ENCODE measurements at regions of chr11 and their contacts with region 1.

Region 1: GRCh38 chr11:131748151-131749050 is 378.0 kb downstream of the NTM start:
- DNase-seq: peak in 2 of 9 donors; percentile 7 to 28
- ATAC-seq: peak; percentile 58
- H3K4me3 ChIP-seq: no peak overlapping the region
- H3K4me3 Mint-ChIP-seq: no peak overlapping the region
- H3K27ac ChIP-seq: no peak overlapping the region
- H3K27ac Mint-ChIP-seq: no peak overlapping the region
- H3K4me1 ChIP-seq: no peaks in the 10 kb centered on the region
- H3K4me1 Mint-ChIP-seq: peaks cover 0 to 1% (median 0%) of the 10 kb centered on the region in 7 donors
- H3K27me3 ChIP-seq: no peaks in the 10 kb centered on the region
- H3K27me3 Mint-ChIP-seq: peaks cover 0 to 14% (median 9%) of the 10 kb centered on the region in 5 donors

Region 2: DNA sequence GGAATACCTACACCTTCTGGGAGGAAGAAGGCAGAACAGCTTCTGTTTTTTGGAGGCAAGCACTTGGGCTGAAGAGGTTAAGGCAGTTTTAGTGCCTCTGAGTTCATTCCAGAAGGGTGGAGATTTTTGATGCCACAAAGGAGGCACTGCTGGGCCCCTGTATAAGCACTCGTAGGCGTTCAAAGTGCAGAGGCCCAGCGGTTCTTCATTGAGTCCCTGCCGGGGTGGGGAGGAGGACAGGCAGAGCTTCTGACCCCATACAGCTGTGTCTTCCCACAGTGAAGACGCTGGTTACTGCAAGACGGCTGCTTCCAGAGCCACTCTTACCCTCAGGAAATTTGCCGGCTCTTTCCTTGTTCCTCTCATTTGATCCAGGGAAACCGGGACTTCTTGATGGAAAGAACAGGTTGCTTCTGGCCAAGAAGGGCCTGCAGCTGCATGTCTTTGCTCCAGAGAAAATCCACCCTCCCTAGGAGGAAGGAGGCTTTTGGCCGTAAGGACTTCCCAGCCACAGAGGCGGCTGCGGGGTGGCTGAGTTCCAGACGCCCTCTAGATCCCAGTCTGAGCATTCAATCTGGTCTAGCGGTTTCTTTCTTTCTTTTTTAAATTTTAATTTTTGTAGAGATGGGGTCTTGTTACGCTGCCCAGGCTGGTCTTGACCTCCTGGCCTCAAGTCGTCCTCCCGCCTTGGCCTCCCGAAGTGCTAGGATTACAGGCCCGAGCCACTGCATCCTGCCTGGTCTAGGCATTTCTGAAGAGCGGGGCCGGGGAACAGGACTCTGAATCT is 1290.6 kb before region 1 on chr11:
- CTCF ChIA-PET with region 1: no interaction called
- POLR2A ChIA-PET with region 1: no interaction called
- intact Hi-C with region 1: no loop called
- DNase-seq: no peak
- ATAC-seq: no peak
- H3K4me3 ChIP-seq: no peak overlapping the region
- H3K4me3 Mint-ChIP-seq: no peak overlapping the region
- H3K27ac ChIP-seq: no peak overlapping the region
- H3K27ac Mint-ChIP-seq: no peak overlapping the region
- H3K4me1 ChIP-seq: no peaks in the 10 kb centered on the region
- H3K4me1 Mint-ChIP-seq: no peaks in the 10 kb centered on the region
- H3K27me3 ChIP-seq: no peaks in the 10 kb centered on the region
- H3K27me3 Mint-ChIP-seq: peaks cover 0 to 40% (median 20%) of the 10 kb centered on the region in 5 donors

Region 3: DNA sequence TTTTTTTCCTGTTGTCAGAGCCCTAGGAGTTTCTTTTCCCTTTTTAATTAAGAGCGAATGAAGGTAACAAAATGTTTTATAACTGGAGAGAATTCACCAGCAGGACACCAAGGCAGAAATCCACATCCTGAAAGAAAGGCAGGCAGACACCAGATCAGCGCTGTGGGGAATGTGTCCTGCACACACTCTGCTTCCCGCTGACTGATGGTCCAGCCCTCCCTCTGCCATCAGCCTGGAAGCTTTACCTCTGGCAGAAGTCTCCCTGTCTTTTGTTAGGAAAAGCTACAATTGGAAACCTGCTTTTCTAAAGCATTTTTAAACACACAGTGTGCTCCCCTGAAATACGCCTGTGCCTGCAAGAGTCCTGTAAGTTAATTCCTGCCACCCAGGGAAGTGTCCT is 260.5 kb after region 1 on chr11:
- CTCF ChIA-PET with region 1: no interaction called
- POLR2A ChIA-PET with region 1: no interaction called
- intact Hi-C with region 1: no loop called
- DNase-seq: no peak
- ATAC-seq: no peak
- H3K4me3 ChIP-seq: no peak overlapping the region
- H3K4me3 Mint-ChIP-seq: no peak overlapping the region
- H3K27ac ChIP-seq: no peak overlapping the region
- H3K27ac Mint-ChIP-seq: no peak overlapping the region
- H3K4me1 ChIP-seq: no peaks in the 10 kb centered on the region
- H3K4me1 Mint-ChIP-seq: no peaks in the 10 kb centered on the region
- H3K27me3 ChIP-seq: no peaks in the 10 kb centered on the region
- H3K27me3 Mint-ChIP-seq: peaks cover 0 to 4% (median 0%) of the 10 kb centered on the region in 5 donors

Region 4: DNA sequence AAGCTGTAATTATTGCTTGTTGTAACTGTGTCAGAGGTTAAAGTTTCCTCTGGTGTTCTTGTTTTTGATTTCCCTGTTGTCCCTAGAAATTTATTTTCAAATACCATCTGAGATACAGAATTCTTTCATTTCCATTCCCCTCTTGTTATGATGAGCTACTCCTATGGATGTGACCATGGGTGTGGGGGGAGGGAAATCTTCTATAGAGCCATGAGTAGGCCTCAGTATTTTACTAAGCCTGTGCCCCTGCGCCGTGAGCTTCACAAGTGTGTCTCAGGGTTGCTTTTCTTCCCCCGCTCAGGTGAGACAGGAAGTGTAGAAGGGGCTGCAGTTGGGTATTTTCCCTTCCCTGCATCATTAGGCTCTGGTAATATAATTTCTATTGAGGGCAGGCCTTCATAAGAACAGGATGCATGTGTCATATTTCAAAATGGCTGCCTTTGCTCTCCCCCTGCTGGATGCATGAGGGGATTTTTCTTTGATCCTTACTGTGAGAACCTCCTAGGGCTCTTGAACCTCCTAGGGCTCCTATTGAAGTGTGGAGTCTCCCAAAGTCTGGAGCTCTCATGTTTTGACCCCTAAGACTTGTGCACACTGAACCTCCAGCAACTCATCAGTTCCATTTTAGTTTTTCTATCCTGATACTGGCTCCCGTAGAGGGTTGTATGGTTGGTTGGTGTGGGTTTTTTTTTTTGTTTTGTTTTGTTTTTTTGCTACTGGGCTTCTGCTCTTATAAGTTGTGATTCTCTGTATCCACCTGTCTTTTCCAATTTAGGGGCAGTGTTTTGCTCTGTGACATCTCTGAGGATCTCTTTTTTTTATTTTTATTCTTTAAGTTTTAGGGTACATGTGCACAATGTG is 280.2 kb after region 1 on chr11:
- CTCF ChIA-PET with region 1: no interaction called
- POLR2A ChIA-PET with region 1: no interaction called
- intact Hi-C with region 1: loop called in 1 of 2 experiments (anchors 1 kb)
- DNase-seq: no peak
- ATAC-seq: peak; percentile 45
- H3K4me3 ChIP-seq: no peak overlapping the region
- H3K4me3 Mint-ChIP-seq: no peak overlapping the region
- H3K27ac ChIP-seq: no peak overlapping the region
- H3K27ac Mint-ChIP-seq: no peak overlapping the region
- H3K4me1 ChIP-seq: no peaks in the 10 kb centered on the region
- H3K4me1 Mint-ChIP-seq: peaks cover 0 to 2% (median 0%) of the 10 kb centered on the region in 7 donors
- H3K27me3 ChIP-seq: no peaks in the 10 kb centered on the region
- H3K27me3 Mint-ChIP-seq: peaks cover 0 to 1% (median 0%) of the 10 kb centered on the region in 5 donors

Region 5: DNA sequence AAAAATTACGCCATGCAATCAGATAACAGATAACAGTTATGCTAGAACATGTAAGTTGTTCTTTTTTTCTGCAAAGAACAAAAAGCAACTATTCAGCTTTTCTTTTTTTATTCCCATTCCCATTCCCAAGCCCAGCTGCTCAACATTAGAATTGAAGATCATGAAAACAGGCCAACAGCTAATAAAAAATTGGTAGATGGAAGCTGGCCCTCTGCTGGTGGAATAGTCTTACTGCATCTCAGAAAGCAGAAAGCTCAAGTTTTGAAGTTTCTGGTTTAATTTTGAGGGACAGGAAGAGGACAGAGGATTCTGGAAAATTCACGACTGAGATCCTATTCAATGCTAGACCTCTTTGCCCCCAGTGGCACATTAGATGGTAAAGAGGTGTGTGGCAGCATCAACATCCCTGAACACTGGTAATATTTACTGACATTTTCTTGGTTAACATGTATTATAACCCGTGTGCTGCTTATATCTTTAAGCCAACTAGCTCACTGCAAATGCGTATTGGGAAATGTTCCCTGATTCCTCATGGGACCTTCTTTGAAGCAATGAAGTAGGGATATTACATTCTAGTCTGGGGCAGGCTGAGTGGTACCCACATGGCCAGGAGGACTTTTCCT is 1192.7 kb after region 1 on chr11:
- CTCF ChIA-PET with region 1: no interaction called
- POLR2A ChIA-PET with region 1: no interaction called
- intact Hi-C with region 1: loop called (anchors 5 to 10 kb)
- DNase-seq: no peak
- ATAC-seq: no peak
- H3K4me3 ChIP-seq: no peak overlapping the region
- H3K4me3 Mint-ChIP-seq: no peak overlapping the region
- H3K27ac ChIP-seq: no peak overlapping the region
- H3K27ac Mint-ChIP-seq: no peak overlapping the region
- H3K4me1 ChIP-seq: no peaks in the 10 kb centered on the region
- H3K4me1 Mint-ChIP-seq: peaks cover 0 to 5% (median 0%) of the 10 kb centered on the region in 7 donors
- H3K27me3 ChIP-seq: no peaks in the 10 kb centered on the region
- H3K27me3 Mint-ChIP-seq: peaks cover 18 to 37% (median 32%) of the 10 kb centered on the region in 5 donors

Measured in naive thymus-derived CD4-positive, alpha-beta T cell (primary cell).